ENCODE measurements at regions of chr2 and their contacts with region 1.

Region 1: DNA sequence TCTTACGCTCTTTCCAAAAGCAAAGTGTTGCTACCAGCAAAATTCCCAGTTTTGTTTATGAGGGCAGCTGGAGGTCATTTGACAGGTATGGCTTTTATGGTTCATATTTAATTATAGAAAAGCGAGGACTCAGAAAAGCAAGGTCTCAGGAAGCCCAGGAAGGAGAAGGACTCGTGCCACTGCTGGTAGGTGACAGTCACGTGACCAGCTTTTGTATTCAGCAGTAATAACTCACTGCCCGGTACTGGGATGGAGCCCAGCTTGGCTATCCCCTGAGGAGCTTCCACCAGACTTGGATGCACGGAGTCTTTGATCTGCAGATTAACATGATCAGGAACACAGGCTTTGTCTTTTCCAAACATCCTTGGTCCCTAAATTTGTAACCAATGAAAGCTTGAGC is 251.9 kb upstream of the HNRNPA3 start:
- DNase-seq: no peak
- ATAC-seq: no peak
- H3K4me3 ChIP-seq: no peak overlapping the region
- H3K4me3 Mint-ChIP-seq: no peak overlapping the region
- H3K27ac ChIP-seq: no peak overlapping the region
- H3K27ac Mint-ChIP-seq: no peak overlapping the region
- H3K4me1 ChIP-seq: no peaks in the 10 kb centered on the region
- H3K4me1 Mint-ChIP-seq: no peaks in the 10 kb centered on the region
- H3K27me3 ChIP-seq: peaks cover 0 to 6% of the 10 kb centered on the region in 2 experiments
- H3K27me3 Mint-ChIP-seq: peaks cover 13 to 17% of the 10 kb centered on the region in 2 donors

Region 2: GRCh38 chr2:176500901-176501300 is 459.8 kb before region 1 on chr2:
- CTCF ChIA-PET with region 1: no interaction called
- POLR2A ChIA-PET with region 1: no interaction called
- DNase-seq: no peak
- ATAC-seq: no peak
- H3K4me3 ChIP-seq: no peak overlapping the region
- H3K4me3 Mint-ChIP-seq: no peak overlapping the region
- H3K27ac ChIP-seq: no peak overlapping the region
- H3K27ac Mint-ChIP-seq: no peak overlapping the region
- H3K4me1 ChIP-seq: no peaks in the 10 kb centered on the region
- H3K4me1 Mint-ChIP-seq: no peaks in the 10 kb centered on the region
- H3K27me3 ChIP-seq: peaks cover 0 to 2% of the 10 kb centered on the region in 2 experiments
- H3K27me3 Mint-ChIP-seq: peaks cover 33 to 36% of the 10 kb centered on the region in 2 donors

Region 3: DNA sequence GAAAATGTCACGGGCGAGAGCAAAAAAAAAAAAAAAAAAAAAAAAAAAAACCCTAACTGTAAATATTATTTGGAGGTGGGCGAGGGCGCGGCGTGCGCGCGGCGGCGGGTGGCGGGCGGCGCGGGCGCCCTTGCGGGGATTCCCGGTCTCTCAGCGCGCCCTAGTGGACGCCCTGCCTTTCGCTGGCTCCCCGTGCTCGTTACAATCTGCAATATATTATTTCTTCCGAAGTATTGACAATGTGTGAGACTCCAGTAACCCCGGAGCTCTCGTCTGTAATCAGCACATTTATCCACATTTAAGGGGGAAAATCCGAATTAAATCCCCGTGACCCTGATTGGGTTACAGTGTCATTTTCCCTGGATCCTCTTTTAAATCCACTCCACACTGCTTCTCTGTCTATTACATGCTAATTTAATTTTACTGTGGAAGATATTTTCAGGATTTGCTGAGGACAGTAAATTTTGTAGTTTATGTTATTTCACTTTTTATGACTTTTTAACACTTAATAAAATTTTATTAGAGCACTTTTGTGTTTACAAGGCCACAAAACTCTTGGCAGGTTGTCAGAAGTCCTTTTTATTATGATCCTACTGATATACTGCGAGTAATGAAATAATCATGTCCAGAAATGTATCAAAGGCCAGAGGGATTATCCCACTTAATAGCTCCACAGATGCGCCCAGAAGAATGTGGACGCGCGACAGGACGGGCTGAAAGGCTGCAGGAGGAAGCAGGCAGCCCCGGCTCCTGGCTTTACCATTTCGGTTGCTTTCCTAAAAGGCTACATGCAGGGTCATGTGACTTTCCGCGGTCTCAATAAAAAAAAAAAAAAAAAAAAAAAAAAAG is 322.3 kb before region 1 on chr2:
- CTCF ChIA-PET with region 1: interaction called in 1 of 2 experiments, 10 read pairs
- POLR2A ChIA-PET with region 1: no interaction called
- DNase-seq: peak in 33 of 35 experiments; percentile 12 to 70 (median 45)
- ATAC-seq: peak; percentile 75 to 90 (median 79)
- H3K4me3 ChIP-seq: peak overlapping the region; percentile 42 to 67
- H3K4me3 Mint-ChIP-seq: peak overlapping the region; percentile 53 to 63 (median 57)
- H3K27ac ChIP-seq: no peak overlapping the region
- H3K27ac Mint-ChIP-seq: no peak overlapping the region
- H3K4me1 ChIP-seq: peaks cover 0 to 9% of the 10 kb centered on the region in 2 experiments
- H3K4me1 Mint-ChIP-seq: peaks cover 0 to 9% (median 9%) of the 10 kb centered on the region in 3 donors
- H3K27me3 ChIP-seq: peaks cover 22 to 37% of the 10 kb centered on the region in 2 experiments
- H3K27me3 Mint-ChIP-seq: peaks cover 56 to 68% of the 10 kb centered on the region in 2 donors

Region 4: GRCh38 chr2:176710657-176711186 is 250.0 kb before region 1 on chr2:
- CTCF ChIA-PET with region 1: no interaction called
- POLR2A ChIA-PET with region 1: interaction called in 1 of 2 experiments, 14 read pairs
- DNase-seq: no peak
- ATAC-seq: no peak
- H3K4me3 ChIP-seq: no peak overlapping the region
- H3K4me3 Mint-ChIP-seq: no peak overlapping the region
- H3K27ac ChIP-seq: no peak overlapping the region
- H3K27ac Mint-ChIP-seq: no peak overlapping the region
- H3K4me1 ChIP-seq: no peaks in the 10 kb centered on the region
- H3K4me1 Mint-ChIP-seq: no peaks in the 10 kb centered on the region
- H3K27me3 ChIP-seq: peaks cover 0 to 9% of the 10 kb centered on the region in 2 experiments
- H3K27me3 Mint-ChIP-seq: peaks cover 22 to 44% of the 10 kb centered on the region in 2 donors

Region 5: DNA sequence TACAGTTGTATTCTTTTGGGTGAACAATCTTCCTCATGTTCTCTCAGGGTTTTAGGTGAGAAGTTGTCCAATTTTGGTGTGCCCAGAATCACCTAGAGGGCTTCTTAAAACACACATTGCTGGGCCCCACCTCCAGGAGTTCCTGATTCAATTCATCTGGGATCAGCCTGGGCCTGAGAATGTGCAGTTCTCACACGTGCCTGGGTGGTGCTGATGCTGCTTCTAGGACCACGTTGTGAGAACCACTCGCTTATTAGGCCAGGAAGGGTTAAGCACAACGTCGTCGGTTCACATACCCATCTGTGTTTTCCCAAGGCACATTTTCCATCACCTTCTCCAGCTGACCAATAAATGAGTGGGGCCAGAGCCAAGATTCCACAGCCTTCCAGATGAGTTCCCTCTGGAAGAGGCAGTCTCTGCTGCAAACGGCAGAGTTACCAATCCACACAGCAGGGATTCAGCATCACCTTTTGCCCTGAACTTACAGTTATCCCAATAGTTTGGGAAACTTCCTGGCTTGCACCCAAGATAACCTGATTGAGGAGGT is 25.8 kb before region 1 on chr2:
- CTCF ChIA-PET with region 1: no interaction called
- POLR2A ChIA-PET with region 1: no interaction called
- DNase-seq: no peak
- ATAC-seq: no peak
- H3K4me3 ChIP-seq: no peak overlapping the region
- H3K4me3 Mint-ChIP-seq: no peak overlapping the region
- H3K27ac ChIP-seq: no peak overlapping the region
- H3K27ac Mint-ChIP-seq: no peak overlapping the region
- H3K4me1 ChIP-seq: peaks cover 0 to 4% of the 10 kb centered on the region in 2 experiments
- H3K4me1 Mint-ChIP-seq: peaks cover 7 to 17% (median 15%) of the 10 kb centered on the region in 3 donors
- H3K27me3 ChIP-seq: no peaks in the 10 kb centered on the region
- H3K27me3 Mint-ChIP-seq: peaks cover 3 to 4% of the 10 kb centered on the region in 2 donors

Measured in T-cell (primary cell).